ENCODE measurements at regions of chr2 and their contacts with region 1.

Region 1: GRCh38 chr2:39124000-39124745 is 3.3 kb upstream of the SOS1 start:
- DNase-seq: peak; percentile 94
- H3K4me3 Mint-ChIP-seq: peak overlapping the region; percentile 99
- H3K27ac Mint-ChIP-seq: peak overlapping the region; percentile 100
- H3K4me1 Mint-ChIP-seq: peaks cover 67% of the 10 kb centered on the region
- H3K27me3 Mint-ChIP-seq: no peaks in the 10 kb centered on the region

Region 2: DNA sequence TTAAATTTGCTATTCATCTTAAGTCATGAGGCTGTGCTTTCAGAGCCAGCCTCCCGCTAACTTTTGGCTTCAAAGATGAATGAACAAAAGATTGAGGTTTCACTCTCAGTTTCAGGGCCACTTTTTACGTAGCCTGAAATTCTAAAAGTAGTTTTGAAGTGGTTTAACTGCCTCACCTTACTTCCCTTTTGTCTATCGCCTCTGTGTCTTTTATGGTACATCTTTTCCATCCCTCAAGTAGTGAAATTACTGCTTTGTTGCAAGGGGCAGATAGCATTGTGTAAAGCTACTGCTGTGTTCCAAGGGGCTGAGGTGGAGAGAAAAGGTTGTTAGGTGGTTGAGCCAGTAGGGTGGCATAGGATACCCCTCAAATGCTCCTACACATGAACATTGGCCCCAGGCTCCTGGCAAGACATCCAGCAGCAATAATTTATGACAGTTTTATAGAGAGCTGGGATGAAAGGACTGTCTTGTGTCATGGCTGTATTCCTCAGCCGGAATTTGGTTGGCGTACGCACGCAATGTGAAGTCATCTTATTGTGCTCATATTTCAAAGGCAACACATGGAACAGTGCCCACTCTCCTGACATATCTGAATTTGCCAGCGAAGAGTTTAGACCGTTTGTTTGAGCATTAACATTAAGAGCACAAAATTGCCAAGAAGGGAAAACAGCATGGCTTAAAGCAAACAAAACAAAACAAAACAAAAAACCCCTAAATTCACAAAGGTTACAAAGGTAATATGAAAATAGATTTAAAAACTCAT is 1747.6 kb before region 1 on chr2:
- intact Hi-C with region 1: loop called (anchors 2 kb)
- DNase-seq: peak; percentile 29
- H3K4me3 Mint-ChIP-seq: peak overlapping the region; percentile 34
- H3K27ac Mint-ChIP-seq: peak overlapping the region; percentile 88
- H3K4me1 Mint-ChIP-seq: peaks cover 51% of the 10 kb centered on the region
- H3K27me3 Mint-ChIP-seq: peaks cover 51% of the 10 kb centered on the region

Region 3: GRCh38 chr2:38653715-38654527 is 470.3 kb before region 1 on chr2:
- intact Hi-C with region 1: loop called (anchors 2 kb)
- DNase-seq: peak; percentile 30
- H3K4me3 Mint-ChIP-seq: peak overlapping the region; percentile 68
- H3K27ac Mint-ChIP-seq: peak overlapping the region; percentile 90
- H3K4me1 Mint-ChIP-seq: peaks cover 80% of the 10 kb centered on the region
- H3K27me3 Mint-ChIP-seq: no peaks in the 10 kb centered on the region

Region 4: DNA sequence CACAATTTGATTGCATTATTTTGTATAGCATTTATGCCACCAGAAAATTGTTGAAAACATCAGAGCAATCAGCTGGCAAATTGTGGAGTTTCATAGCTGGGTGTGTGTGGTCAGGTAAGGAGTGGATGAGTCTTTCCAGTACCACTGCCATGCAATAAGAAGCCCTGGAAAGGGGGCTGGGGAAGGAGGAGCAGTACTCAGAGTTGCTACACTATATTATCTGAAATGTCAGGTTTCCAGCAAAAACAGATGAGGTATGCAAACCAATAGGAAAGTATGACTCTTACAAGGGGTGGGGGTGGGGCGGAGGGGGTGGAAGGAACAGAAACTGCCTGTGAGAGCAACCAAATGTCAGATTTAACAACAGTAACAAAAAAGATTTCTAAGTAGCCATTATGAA is 115.5 kb before region 1 on chr2:
- intact Hi-C with region 1: loop called (anchors 2 kb)
- DNase-seq: no peak
- H3K4me3 Mint-ChIP-seq: peak overlapping the region; percentile 45
- H3K27ac Mint-ChIP-seq: peak overlapping the region; percentile 94
- H3K4me1 Mint-ChIP-seq: peaks cover 19% of the 10 kb centered on the region
- H3K27me3 Mint-ChIP-seq: no peaks in the 10 kb centered on the region

Region 5: DNA sequence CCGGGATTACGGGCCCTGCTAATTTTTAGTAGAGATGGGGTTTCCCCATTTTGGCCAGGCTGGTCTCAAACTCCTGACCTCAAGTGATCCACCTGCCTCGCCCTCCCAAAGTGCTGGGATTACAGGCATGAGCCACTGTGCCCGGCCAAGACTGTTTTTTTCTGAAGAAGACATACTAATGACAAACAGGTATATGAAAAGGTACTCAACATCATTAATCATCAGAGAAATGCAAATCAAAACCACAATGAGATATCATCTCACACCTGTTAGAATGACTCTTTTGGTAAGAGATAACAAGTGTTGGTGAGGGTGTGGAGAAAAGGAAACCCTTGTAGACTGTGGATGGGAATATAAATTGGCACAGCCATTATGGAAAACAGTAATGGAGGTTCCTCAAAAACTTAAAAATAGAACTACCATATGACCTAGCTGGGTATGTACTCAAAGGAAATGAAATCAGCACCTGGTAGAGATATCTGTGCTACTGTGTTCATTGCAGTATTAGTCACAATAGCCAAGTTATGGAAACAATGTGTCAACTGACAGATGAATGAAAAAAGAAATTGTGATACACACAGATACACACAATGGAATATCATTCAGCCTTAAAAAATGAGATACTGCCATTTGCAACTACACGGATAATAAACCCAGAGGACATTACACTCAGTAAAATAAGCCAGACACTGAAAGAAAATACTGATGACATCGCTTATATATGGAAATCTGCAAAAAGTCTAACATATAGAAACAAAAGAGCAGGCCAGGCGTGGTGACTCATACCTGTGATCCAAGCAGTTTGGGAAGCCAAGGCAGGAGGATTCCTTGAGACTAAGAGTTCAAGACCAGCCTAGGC is 24.1 kb before region 1 on chr2:
- intact Hi-C with region 1: loop called (anchors 1 kb)
- DNase-seq: no peak
- H3K4me3 Mint-ChIP-seq: peak overlapping the region; percentile 53
- H3K27ac Mint-ChIP-seq: peak overlapping the region; percentile 89
- H3K4me1 Mint-ChIP-seq: peaks cover 70% of the 10 kb centered on the region
- H3K27me3 Mint-ChIP-seq: no peaks in the 10 kb centered on the region

Region 6: DNA sequence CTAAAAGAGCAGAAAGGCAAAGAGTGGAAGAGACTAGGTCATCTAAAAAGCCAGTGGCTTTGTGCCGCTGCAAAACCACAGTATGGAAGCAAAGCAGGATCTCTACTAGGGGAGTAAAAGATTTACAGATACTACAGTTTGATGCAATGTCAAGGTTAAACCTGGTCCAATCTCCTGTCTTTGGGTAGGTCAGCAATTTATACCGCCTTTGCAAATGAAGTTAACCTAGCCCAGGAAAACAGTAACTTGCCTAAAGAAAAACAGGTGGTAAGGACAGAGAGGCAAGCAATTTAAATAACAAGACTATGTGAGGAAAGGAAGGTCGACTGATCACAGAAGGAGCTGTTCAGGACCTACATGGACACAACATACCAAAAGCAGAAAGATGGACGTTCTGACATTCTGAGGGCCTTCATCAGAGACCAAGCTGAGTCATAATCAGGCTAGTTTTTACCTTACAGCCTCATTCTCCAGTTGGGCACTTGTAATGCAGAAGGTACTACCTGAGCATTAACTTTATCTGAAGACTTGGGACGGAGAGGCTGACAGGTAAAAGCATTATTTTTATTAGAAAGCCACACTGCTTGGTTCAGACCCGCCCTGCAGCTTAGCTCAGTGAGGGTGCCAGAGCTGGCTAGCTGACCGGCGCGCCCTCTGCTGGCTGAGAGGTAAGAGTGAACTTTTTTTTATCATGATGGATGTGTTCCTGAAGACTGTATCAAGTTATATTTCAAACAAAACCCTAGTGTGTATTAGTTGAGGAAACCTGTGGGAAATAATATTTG is 103.6 kb after region 1 on chr2:
- intact Hi-C with region 1: loop called (anchors 1 kb)
- DNase-seq: peak; percentile 70
- H3K4me3 Mint-ChIP-seq: peak overlapping the region; percentile 76
- H3K27ac Mint-ChIP-seq: peak overlapping the region; percentile 83
- H3K4me1 Mint-ChIP-seq: peaks cover 54% of the 10 kb centered on the region
- H3K27me3 Mint-ChIP-seq: no peaks in the 10 kb centered on the region

Region 7: GRCh38 chr2:39513641-39514094 is 389.5 kb after region 1 on chr2:
- intact Hi-C with region 1: loop called (anchors 1 kb)
- DNase-seq: peak; percentile 37
- H3K4me3 Mint-ChIP-seq: peak overlapping the region; percentile 3
- H3K27ac Mint-ChIP-seq: peak overlapping the region; percentile 66
- H3K4me1 Mint-ChIP-seq: peaks cover 50% of the 10 kb centered on the region
- H3K27me3 Mint-ChIP-seq: peaks cover 2% of the 10 kb centered on the region